ENCODE measurements at regions of chr9 and their contacts with region 1.

Region 1: GRCh38 chr9:86324308-86324707 is 29.9 kb downstream of the TUT7 start:
- DNase-seq: no peak
- H3K4me3 ChIP-seq: no peak overlapping the region
- H3K27ac ChIP-seq: no peak overlapping the region
- H3K4me1 ChIP-seq: no peaks in the 10 kb centered on the region
- H3K27me3 ChIP-seq: no peaks in the 10 kb centered on the region
- CTCF ChIP-seq: no peak
- EP300 ChIP-seq: no peak
- POLR2A ChIP-seq: no peak

Region 2: GRCh38 chr9:84397151-84397728 is 1927.1 kb before region 1 on chr9:
- in situ Hi-C with region 1: no loop called
- intact Hi-C with region 1: no loop called
- DNase-seq: peak; percentile 76
- H3K4me3 ChIP-seq: no peak overlapping the region
- H3K27ac ChIP-seq: no peak overlapping the region
- H3K4me1 ChIP-seq: peaks cover 0 to 3% (median 0%) of the 10 kb centered on the region in 4 donors
- H3K27me3 ChIP-seq: peaks cover 4% of the 10 kb centered on the region
- CTCF ChIP-seq: peak; percentile 88 to 96 (median 92)
- EP300 ChIP-seq: no peak
- POLR2A ChIP-seq: no peak

Region 3: DNA sequence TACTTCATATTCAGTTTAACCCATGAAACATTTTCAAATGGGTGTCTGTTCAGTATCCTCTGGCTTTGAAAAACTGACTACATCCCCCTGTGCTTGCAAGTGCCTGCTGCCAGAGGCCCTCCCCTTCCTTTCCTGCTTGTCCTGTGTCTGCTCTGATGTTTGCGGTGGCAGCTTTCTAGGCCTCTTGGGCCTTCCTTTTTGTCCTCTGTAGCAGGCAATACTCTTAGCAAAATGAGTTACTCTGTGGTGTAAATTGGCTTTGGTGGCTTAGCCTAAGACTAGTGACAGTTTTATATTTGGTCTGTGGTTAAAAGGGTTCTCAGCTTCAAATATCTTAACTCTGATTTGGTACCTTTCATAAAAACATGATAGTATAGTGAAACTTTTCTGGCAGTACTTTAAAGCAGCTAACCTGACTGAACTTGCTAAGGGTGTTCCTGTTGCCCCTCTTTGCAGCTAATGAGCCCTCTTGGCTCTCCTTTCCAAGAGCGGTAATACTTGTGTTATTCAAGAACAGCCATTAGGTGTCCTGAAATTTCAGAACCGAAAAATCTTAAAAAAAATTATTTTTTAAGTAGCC is 301.5 kb before region 1 on chr9:
- in situ Hi-C with region 1: loop called in 1 of 4 experiments (anchors 25 kb)
- intact Hi-C with region 1: no loop called
- DNase-seq: no peak
- H3K4me3 ChIP-seq: no peak overlapping the region
- H3K27ac ChIP-seq: no peak overlapping the region
- H3K4me1 ChIP-seq: no peaks in the 10 kb centered on the region
- H3K27me3 ChIP-seq: no peaks in the 10 kb centered on the region
- CTCF ChIP-seq: no peak
- EP300 ChIP-seq: no peak
- POLR2A ChIP-seq: no peak